ENCODE measurements at regions of chr1 and their contacts with region 1.

Region 1: GRCh38 chr1:52002038-52002917 is 11.8 kb upstream of the RAB3B start:
- DNase-seq: peak in 31 of 42 donors; percentile 10 to 87 (median 50)

Region 2: GRCh38 chr1:51648180-51649109 is 353.8 kb before region 1 on chr1:
- intact Hi-C with region 1: no loop called
- DNase-seq: peak in 4 of 42 donors; percentile 3 to 39 (median 7)

Region 3: DNA sequence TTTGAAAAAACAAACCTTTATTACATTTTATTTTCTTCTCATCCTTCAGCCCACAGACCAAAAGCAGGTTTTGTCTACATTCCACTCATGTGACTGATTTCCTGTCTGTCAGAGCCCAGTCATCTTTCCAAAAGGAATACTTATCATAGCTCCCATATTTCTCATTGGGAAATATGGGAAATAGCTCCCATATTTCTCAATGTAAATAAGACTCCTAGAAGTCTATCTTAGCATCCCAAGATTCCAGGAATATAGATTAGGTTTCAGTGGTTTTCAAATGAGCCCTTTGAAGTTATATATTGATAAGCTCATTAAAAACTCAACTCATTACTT is 104.6 kb before region 1 on chr1:
- intact Hi-C with region 1: loop called (anchors 5 kb)
- DNase-seq: no peak

Region 4: GRCh38 chr1:51926171-51926812 is 76.0 kb before region 1 on chr1:
- intact Hi-C with region 1: no loop called
- DNase-seq: peak in 1 of 42 donors; percentile 2

Measured in head of caudate nucleus (tissue), 42 donors.